IMR-90 (cell line): ENCODE measurements at regions of chr9 and their contacts with region 1.

Region 1: GRCh38 chr9:77328102-77328501 is 150.8 kb downstream of the VPS13A start:
- DNase-seq: no peak
- ATAC-seq: no peak
- H3K4me3 ChIP-seq: no peak overlapping the region
- H3K27ac ChIP-seq: no peak overlapping the region
- H3K4me1 ChIP-seq: no peaks in the 10 kb centered on the region
- H3K27me3 ChIP-seq: no peaks in the 10 kb centered on the region
- CTCF ChIP-seq: no peak
- POLR2A ChIP-seq: no peak
- RAD21 ChIP-seq: no peak

Region 2: GRCh38 chr9:76827286-76828080 is 500.6 kb before region 1 on chr9:
- CTCF ChIA-PET with region 1: no interaction called
- POLR2A ChIA-PET with region 1: no interaction called
- dilution Hi-C with region 1: no loop called
- in situ Hi-C with region 1: no loop called
- intact Hi-C with region 1: no loop called
- DNase-seq: no peak
- ATAC-seq: no peak
- H3K4me3 ChIP-seq: no peak overlapping the region
- H3K27ac ChIP-seq: no peak overlapping the region
- H3K4me1 ChIP-seq: no peaks in the 10 kb centered on the region
- H3K27me3 ChIP-seq: no peaks in the 10 kb centered on the region
- CTCF ChIP-seq: no peak
- POLR2A ChIP-seq: no peak
- RAD21 ChIP-seq: no peak

Region 3: GRCh38 chr9:77063645-77064285 is 264.3 kb before region 1 on chr9:
- CTCF ChIA-PET with region 1: no interaction called
- POLR2A ChIA-PET with region 1: no interaction called
- dilution Hi-C with region 1: no loop called
- in situ Hi-C with region 1: no loop called
- intact Hi-C with region 1: no loop called
- DNase-seq: peak; percentile 47
- ATAC-seq: peak; percentile 74
- H3K4me3 ChIP-seq: no peak overlapping the region
- H3K27ac ChIP-seq: no peak overlapping the region
- H3K4me1 ChIP-seq: no peaks in the 10 kb centered on the region
- H3K27me3 ChIP-seq: no peaks in the 10 kb centered on the region
- CTCF ChIP-seq: no peak
- POLR2A ChIP-seq: no peak
- RAD21 ChIP-seq: no peak

Region 4: DNA sequence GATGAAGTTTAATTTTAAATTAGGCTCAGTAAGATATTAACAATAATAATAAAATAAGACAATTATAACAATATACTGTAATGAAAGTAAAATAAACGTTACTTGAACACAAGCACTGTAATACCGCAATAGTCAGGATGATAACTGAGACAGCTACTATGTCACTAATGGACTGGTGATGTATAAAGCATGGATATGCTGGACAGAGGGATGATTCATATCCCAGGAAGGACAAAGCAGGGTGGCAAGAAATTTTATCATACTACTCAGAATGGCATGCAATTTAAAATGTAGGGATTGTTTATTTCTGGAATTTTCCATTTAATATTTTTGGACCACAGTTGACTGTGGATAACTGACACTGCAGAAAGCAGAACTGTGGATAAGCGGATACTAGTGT is 46.2 kb after region 1 on chr9:
- CTCF ChIA-PET with region 1: no interaction called
- POLR2A ChIA-PET with region 1: no interaction called
- dilution Hi-C with region 1: no loop called
- in situ Hi-C with region 1: no loop called
- intact Hi-C with region 1: loop called (anchors 5 kb)
- DNase-seq: peak; percentile 60
- ATAC-seq: peak; percentile 76
- H3K4me3 ChIP-seq: no peak overlapping the region
- H3K27ac ChIP-seq: no peak overlapping the region
- H3K4me1 ChIP-seq: no peaks in the 10 kb centered on the region
- H3K27me3 ChIP-seq: no peaks in the 10 kb centered on the region
- CTCF ChIP-seq: no peak
- POLR2A ChIP-seq: no peak
- RAD21 ChIP-seq: no peak

Region 5: DNA sequence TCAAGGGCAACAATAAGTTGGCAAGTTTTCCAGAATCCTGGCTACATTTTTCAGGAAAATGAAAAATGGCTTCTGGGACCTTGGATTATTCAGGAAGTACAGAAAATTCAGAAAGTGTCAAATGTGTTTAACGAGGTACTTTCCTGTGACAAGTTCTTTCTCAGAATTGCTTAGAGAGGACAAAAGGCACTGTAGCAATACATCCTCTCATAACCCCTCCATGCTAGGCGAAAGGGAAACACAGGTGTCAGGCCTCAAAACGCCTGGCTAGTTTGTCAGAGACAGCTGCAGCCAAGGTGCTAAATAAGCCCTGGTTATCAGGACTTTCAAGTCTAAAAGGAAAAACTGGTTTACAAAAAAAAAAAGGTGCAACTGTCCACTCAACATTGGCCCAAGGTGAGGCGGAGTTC is 588.3 kb after region 1 on chr9:
- CTCF ChIA-PET with region 1: no interaction called
- POLR2A ChIA-PET with region 1: no interaction called
- dilution Hi-C with region 1: no loop called
- in situ Hi-C with region 1: no loop called
- intact Hi-C with region 1: no loop called
- DNase-seq: no peak
- ATAC-seq: no peak
- H3K4me3 ChIP-seq: no peak overlapping the region
- H3K27ac ChIP-seq: no peak overlapping the region
- H3K4me1 ChIP-seq: no peaks in the 10 kb centered on the region
- H3K27me3 ChIP-seq: no peaks in the 10 kb centered on the region
- CTCF ChIP-seq: no peak
- POLR2A ChIP-seq: no peak
- RAD21 ChIP-seq: no peak